A549 (cell line): ENCODE measurements at regions of chr12 and their contacts with region 1.

Region 1: GRCh38 chr12:6620137-6620884 is 13.1 kb upstream of the CHD4 start:
- DNase-seq: no peak
- ATAC-seq: no peak
- H3K4me3 ChIP-seq: no peak overlapping the region
- H3K27ac ChIP-seq: no peak overlapping the region
- H3K4me1 ChIP-seq: no peaks in the 10 kb centered on the region
- CTCF ChIP-seq: no peak
- EP300 ChIP-seq: no peak
- POLR2A ChIP-seq: no peak
- RAD21 ChIP-seq: no peak

Region 2: DNA sequence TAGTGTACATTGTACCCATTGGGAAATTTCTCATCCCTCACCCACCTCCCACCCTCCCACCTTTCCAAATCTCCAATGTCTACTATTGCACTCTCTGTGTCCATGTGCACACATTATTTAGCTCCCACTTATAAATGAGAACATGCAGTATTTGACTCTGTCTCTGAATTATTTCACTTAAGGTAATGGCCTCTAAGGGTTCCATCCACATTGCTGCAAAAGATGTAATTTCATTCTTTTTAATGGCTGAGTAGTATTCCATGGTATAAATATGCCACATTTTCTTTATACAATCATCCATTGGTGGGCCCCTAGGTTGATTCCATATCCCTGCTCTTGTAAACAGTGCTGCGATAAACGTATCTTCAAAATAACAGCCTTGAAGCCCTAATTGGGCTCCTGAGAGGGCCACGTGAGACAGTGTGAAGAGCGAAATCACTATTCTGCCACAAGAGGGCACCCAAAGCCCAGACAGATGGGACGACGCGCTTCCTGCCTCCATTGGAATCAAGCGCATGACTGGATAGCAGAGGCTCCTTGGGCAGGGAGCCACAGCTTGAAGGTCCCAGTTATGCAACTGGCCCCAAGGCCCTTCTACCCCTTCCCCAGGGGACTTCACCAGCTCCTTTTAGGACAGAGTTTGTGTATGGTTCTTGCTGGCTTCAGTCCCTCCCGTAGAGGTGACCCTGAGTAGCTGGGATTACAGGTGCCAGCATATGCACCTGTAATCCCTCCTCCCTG is 196.9 kb before region 1 on chr12:
- CTCF ChIA-PET with region 1: no interaction called
- POLR2A ChIA-PET with region 1: no interaction called
- DNase-seq: peak; percentile 87 to 93
- ATAC-seq: peak; percentile 91 to 95
- H3K4me3 ChIP-seq: no peak overlapping the region
- H3K27ac ChIP-seq: peak overlapping the region; percentile 42 to 76; a peak in 4 of 6 replicates
- H3K4me1 ChIP-seq: peaks cover 26% of the 10 kb centered on the region
- CTCF ChIP-seq: peak; percentile 95
- EP300 ChIP-seq: no peak
- POLR2A ChIP-seq: no peak
- RAD21 ChIP-seq: peak; percentile 98

Region 3: GRCh38 chr12:6697584-6698351 is 77.5 kb after region 1 on chr12:
- CTCF ChIA-PET with region 1: interaction called, 14 read pairs
- POLR2A ChIA-PET with region 1: no interaction called
- DNase-seq: peak; percentile 76 to 82
- ATAC-seq: peak; percentile 77 to 93
- H3K4me3 ChIP-seq: no peak overlapping the region
- H3K27ac ChIP-seq: no peak overlapping the region
- H3K4me1 ChIP-seq: peaks cover 7% of the 10 kb centered on the region; the same call in 1 of the 3 replicates
- CTCF ChIP-seq: peak; percentile 64
- EP300 ChIP-seq: no peak
- POLR2A ChIP-seq: no peak
- RAD21 ChIP-seq: peak; percentile 76 to 91